PC-9 (cell line): ENCODE measurements at regions of chr10 and their contacts with region 1.

Region 1: DNA sequence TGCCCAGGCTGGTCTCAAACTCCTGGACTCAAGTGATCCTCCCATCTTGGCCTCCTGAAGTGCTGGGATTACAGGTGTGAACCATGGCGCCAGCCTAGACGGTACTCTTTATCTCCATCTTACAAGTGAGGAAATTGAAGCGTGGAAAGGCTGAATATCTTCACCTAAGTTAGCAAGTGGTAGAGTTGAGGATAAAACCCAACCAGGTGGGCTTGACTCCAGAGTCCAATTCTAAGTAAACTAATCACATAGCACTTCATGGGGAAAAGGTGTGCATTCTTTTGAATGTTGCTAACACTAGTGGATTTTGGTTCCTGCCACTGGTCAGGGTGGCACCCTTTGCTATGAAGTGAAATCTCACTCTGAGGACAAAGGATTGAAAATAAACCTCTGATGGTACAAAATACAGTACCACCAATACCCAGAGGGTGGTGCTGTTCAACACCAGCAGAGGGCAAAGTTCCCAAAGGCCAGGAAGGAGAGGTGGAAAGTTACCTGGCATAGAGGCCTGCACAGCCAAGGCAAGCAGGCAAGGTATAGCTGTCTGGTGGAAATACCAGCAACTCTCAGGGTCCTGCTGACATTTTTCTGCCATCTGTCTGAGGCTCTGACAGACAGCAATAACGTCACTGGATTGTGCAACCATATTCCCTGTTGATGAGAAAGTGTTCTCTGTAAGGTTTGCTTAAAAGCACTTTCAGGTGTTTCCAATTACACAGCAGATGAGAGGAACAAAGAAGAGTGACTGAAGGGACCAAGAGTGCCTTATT is 17.6 kb downstream of the ZDHHC16 start:
- DNase-seq: peak; percentile 54 to 71
- H3K4me3 ChIP-seq: no peak overlapping the region
- H3K27ac ChIP-seq: 0 out of 2 replicates have a peak overlapping the region, but pooled peaks have one; percentile 19
- H3K4me1 ChIP-seq: peaks cover 7% of the 10 kb centered on the region; the same call in 1 of the 2 replicates
- H3K27me3 ChIP-seq: no peaks in the 10 kb centered on the region
- CTCF ChIP-seq: peak; percentile 87

Region 2: DNA sequence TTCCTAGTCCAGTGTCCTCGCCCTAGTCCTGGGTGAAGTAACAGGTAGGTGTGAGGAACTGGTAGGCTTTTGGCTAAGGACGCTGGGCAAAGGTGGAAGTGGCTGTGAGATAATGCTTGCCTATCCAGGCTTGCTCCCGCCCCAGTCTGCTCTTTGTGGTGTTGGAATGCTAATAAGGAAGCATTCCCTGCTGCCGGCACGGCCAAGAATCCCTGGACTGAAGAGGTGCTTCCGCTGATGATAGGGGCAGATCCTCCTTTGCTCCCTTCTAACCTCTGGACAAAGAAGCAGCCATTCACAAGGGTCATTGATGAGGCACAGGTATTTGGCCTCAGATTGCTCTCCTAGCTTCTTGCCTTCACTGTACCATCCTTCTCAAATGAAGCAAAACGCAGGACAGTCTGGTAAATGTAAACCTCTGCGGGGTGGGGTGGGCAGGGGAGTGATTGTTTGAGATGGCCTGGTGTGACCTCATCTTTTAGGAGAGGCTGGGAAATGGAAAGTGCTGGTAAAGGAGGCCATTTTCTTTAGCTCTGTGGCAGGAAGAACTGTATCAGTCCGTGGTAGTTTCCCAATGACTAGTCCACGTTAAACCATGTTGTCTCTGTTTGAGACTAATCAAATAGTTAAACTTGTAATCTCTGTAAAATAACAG is 35.9 kb before region 1 on chr10:
- CTCF ChIA-PET with region 1: no interaction called
- POLR2A ChIA-PET with region 1: no interaction called
- intact Hi-C with region 1: no loop called
- DNase-seq: peak; percentile 51 to 55
- H3K4me3 ChIP-seq: peak overlapping the region; percentile 84
- H3K27ac ChIP-seq: peak overlapping the region; percentile 29; the same call in 1 of the 2 replicates
- H3K4me1 ChIP-seq: peaks cover 12% of the 10 kb centered on the region
- H3K27me3 ChIP-seq: no peaks in the 10 kb centered on the region
- CTCF ChIP-seq: no peak

Region 3: GRCh38 chr10:97445722-97446639 is 17.6 kb before region 1 on chr10 and contains the starts of genes EXOSC1 and ZDHHC16:
- CTCF ChIA-PET with region 1: no interaction called
- POLR2A ChIA-PET with region 1: interaction called, 11 read pairs
- intact Hi-C with region 1: no loop called
- DNase-seq: peak; percentile 85 to 87
- H3K4me3 ChIP-seq: peak within 1 kb of the TSS; percentile 97
- H3K27ac ChIP-seq: no peak within 1 kb of the TSS
- H3K4me1 ChIP-seq: peaks cover 30% of the 10 kb centered on the region
- H3K27me3 ChIP-seq: no peaks in the 10 kb centered on the region
- CTCF ChIP-seq: no peak
- total RNA-seq, gene EXOSC1: 25.4 and 27.0 TPM in 2 replicates
- total RNA-seq, gene ZDHHC16: 29.1 and 29.6 TPM in 2 replicates

Region 4: GRCh38 chr10:97553575-97554031 is 90.1 kb after region 1 on chr10:
- CTCF ChIA-PET with region 1: no interaction called
- POLR2A ChIA-PET with region 1: interaction called, 3 read pairs
- intact Hi-C with region 1: loop called (anchors 1 kb)
- DNase-seq: peak in 1 of 2 experiments; percentile 42
- H3K4me3 ChIP-seq: no peak overlapping the region
- H3K27ac ChIP-seq: no peak overlapping the region
- H3K4me1 ChIP-seq: no peaks in the 10 kb centered on the region
- H3K27me3 ChIP-seq: no peaks in the 10 kb centered on the region
- CTCF ChIP-seq: peak; percentile 61

Region 5: DNA sequence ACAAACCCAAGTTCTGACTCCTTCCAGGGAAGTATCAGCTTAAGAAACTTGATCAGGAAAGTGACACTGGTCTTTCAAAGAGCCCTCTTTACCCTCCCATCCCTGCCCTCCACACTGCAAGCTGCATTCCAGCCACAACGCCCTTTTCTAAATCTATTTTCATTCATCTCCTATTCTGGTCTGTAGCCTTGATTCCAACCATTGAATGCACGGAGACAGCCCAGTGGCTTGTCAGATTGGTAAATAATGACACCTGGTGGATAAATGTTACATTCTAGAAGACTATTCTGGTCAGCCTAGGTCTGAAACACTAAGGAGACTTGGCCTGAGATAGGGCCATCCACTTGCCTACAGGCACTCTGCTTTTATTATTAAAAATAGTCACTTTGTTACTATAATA is 148.8 kb after region 1 on chr10:
- CTCF ChIA-PET with region 1: interaction called, 9 read pairs
- POLR2A ChIA-PET with region 1: no interaction called
- intact Hi-C with region 1: loop called (anchors 1 kb)
- DNase-seq: peak; percentile 10 to 51
- H3K4me3 ChIP-seq: no peak overlapping the region
- H3K27ac ChIP-seq: no peak overlapping the region
- H3K4me1 ChIP-seq: no peaks in the 10 kb centered on the region
- H3K27me3 ChIP-seq: no peaks in the 10 kb centered on the region
- CTCF ChIP-seq: peak; percentile 67

Region 6: DNA sequence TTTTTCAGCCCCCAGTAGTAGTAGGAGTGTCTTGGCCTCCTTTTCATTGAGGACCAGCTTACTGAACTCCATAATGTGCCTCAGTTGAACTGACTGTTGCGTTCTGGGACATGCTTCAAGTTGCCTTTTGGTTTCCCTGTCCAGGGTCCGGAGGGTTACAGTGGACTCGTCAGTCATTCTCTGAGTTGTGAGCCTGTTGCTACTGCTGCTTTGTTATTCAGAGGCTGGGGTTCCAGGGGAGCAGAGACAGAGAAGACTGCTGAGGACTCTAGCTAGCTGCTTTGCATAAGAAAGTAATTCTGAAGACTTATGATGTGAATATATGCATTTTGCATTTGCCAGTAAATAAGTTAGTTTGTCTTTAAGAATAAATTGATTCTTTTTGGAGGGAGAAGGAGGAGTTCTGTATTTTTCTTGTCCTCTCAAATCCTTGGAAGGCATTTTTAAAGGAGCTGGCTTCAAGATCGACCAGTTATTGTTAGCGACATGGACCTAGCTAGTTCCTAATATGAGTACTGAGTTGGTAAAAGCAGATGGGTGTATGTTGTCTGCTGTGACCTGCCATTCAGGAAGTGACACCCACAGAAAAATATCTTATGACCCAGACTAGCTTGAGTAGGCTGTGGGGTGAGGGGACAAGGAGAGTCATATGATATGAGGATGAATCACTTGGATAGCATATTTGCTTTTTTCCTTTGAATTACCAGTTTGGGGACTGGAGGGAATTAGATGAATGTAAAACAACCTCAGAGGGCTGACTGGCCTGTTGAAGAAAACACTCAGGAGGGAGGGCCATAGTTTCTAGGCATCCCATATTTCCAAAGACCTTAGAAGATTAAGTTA is 185.2 kb after region 1 on chr10:
- CTCF ChIA-PET with region 1: no interaction called
- POLR2A ChIA-PET with region 1: no interaction called
- intact Hi-C with region 1: no loop called
- DNase-seq: peak; percentile 49 to 93
- H3K4me3 ChIP-seq: peak overlapping the region; percentile 29; the same call in 1 of the 2 replicates
- H3K27ac ChIP-seq: peak overlapping the region; percentile 91
- H3K4me1 ChIP-seq: peaks cover 63% of the 10 kb centered on the region
- H3K27me3 ChIP-seq: no peaks in the 10 kb centered on the region
- CTCF ChIP-seq: no peak